Activated CD8-positive, alpha-beta T cell treated with anti-CD3 and anti-CD28 coated beads for 36 hours (primary cell): ENCODE measurements at regions of chr1 and their contacts with region 1.

Region 1: GRCh38 chr1:214228976-214229375 is 52.0 kb upstream of the SMYD2 start:
- DNase-seq: no peak
- ATAC-seq: no peak
- H3K4me3 Mint-ChIP-seq: no peak overlapping the region
- H3K27ac Mint-ChIP-seq: no peak overlapping the region
- H3K4me1 Mint-ChIP-seq: no peaks in the 10 kb centered on the region
- H3K27me3 Mint-ChIP-seq: peaks cover 8% of the 10 kb centered on the region
- CTCF ChIP-seq: no peak

Region 2: GRCh38 chr1:214213136-214213535 is 15.8 kb before region 1 on chr1:
- CTCF ChIA-PET with region 1: interaction called, 11 read pairs
- POLR2A ChIA-PET with region 1: no interaction called
- intact Hi-C with region 1: no loop called
- DNase-seq: no peak
- ATAC-seq: no peak
- H3K4me3 Mint-ChIP-seq: no peak overlapping the region
- H3K27ac Mint-ChIP-seq: no peak overlapping the region
- H3K4me1 Mint-ChIP-seq: peaks cover 2% of the 10 kb centered on the region
- H3K27me3 Mint-ChIP-seq: peaks cover 10% of the 10 kb centered on the region
- CTCF ChIP-seq: no peak